Heart right ventricle (tissue), 16 donors: ENCODE measurements at regions of chr4 and their contacts with region 1.

Region 1: DNA sequence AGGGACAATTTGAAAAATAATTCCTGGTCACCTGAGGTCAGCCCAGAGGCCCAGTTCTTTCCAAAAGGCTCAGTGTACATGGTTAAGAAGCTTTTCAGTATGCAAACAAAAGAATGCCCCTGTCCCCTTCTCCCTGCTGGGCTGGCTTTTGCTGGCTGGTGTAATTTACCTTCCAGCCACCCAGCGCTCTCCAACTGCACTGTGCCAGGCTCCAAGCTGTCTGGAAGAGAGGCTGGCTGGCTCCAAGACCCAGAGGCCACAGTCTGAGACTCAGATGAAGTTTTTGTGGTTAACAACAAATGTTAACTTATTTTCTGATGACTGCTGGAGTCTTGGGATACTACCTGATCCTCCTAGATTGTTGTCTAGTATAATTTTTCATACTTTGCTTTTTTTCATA is 11.9 kb upstream of the KIT start:
- DNase-seq: no peak
- ATAC-seq: no peak
- H3K4me3 ChIP-seq: no peak overlapping the region
- H3K27ac ChIP-seq: no peak overlapping the region
- H3K4me1 ChIP-seq: peaks cover 0 to 16% (median 0%) of the 10 kb centered on the region in 9 donors
- H3K27me3 ChIP-seq: no peaks in the 10 kb centered on the region
- CTCF ChIP-seq: no peak

Region 2: GRCh38 chr4:54558889-54559677 is 86.7 kb before region 1 on chr4:
- intact Hi-C with region 1: no loop called
- DNase-seq: no peak
- ATAC-seq: no peak
- H3K4me3 ChIP-seq: no peak overlapping the region
- H3K27ac ChIP-seq: no peak overlapping the region
- H3K4me1 ChIP-seq: peaks cover 0 to 5% (median 0%) of the 10 kb centered on the region in 9 donors
- H3K27me3 ChIP-seq: no peaks in the 10 kb centered on the region
- CTCF ChIP-seq: no peak

Region 3: DNA sequence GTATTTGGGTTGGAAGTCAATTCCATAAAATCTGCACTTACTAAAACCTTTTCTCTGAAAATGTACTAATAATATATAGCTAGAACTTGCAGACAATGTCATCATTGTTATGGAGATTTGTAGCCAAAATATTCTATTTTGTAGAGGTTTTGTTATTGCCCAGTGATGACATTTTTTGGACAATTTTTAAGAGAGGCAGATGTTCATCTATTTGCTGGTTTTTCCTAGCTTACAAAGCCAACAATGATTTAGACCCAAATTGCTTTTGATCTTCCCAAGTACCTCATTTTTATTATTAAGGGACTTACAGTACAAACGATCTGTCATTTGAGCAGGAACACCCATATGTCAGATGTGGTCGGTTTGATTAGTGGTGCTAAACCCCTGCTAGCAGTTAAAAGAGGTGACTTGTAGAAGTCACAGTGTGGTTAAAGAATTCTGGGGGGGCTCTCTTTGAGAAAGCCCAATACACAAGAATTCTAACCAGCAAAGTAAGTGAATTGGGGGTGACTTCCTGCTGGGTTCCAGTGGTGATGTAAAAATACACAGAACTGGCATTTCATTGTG is 148.1 kb after region 1 on chr4:
- intact Hi-C with region 1: no loop called
- DNase-seq: no peak
- ATAC-seq: no peak
- H3K4me3 ChIP-seq: no peak overlapping the region
- H3K27ac ChIP-seq: no peak overlapping the region
- H3K4me1 ChIP-seq: no peaks in the 10 kb centered on the region
- H3K27me3 ChIP-seq: no peaks in the 10 kb centered on the region
- CTCF ChIP-seq: no peak

Region 4: GRCh38 chr4:55255179-55255578 is 609.3 kb after region 1 on chr4:
- intact Hi-C with region 1: loop called in 1 of 10 experiments (anchors 5 kb)
- DNase-seq: no peak
- ATAC-seq: no peak
- H3K4me3 ChIP-seq: no peak overlapping the region
- H3K27ac ChIP-seq: no peak overlapping the region
- H3K4me1 ChIP-seq: peaks cover 0 to 19% (median 0%) of the 10 kb centered on the region in 9 donors
- H3K27me3 ChIP-seq: no peaks in the 10 kb centered on the region
- CTCF ChIP-seq: no peak